ENCODE measurements at regions of chr3 and their contacts with region 1.

Region 1: GRCh38 chr3:162933656-162934055 is 1437.0 kb downstream of the OTOL1 start:
- DNase-seq: no peak
- ATAC-seq: no peak
- H3K4me3 ChIP-seq: no peak overlapping the region
- H3K27ac ChIP-seq: no peak overlapping the region
- H3K4me1 ChIP-seq: no peaks in the 10 kb centered on the region
- H3K27me3 ChIP-seq: no peaks in the 10 kb centered on the region
- CTCF ChIP-seq: no peak

Region 2: GRCh38 chr3:162956711-162957110 is 23.1 kb after region 1 on chr3:
- intact Hi-C with region 1: loop called in 1 of 2 experiments (anchors 1 kb)
- DNase-seq: no peak
- ATAC-seq: no peak
- H3K4me3 ChIP-seq: no peak overlapping the region
- H3K27ac ChIP-seq: no peak overlapping the region
- H3K4me1 ChIP-seq: no peaks in the 10 kb centered on the region
- H3K27me3 ChIP-seq: no peaks in the 10 kb centered on the region
- CTCF ChIP-seq: no peak

Region 3: GRCh38 chr3:164024786-164025185 is 1091.1 kb after region 1 on chr3:
- intact Hi-C with region 1: no loop called
- DNase-seq: no peak
- ATAC-seq: no peak
- H3K4me3 ChIP-seq: no peak overlapping the region
- H3K27ac ChIP-seq: no peak overlapping the region
- H3K4me1 ChIP-seq: no peaks in the 10 kb centered on the region
- H3K27me3 ChIP-seq: no peaks in the 10 kb centered on the region
- CTCF ChIP-seq: no peak